Adrenal gland (tissue), 19 donors: ENCODE measurements at regions of chr6 and their contacts with region 1.

Region 1: DNA sequence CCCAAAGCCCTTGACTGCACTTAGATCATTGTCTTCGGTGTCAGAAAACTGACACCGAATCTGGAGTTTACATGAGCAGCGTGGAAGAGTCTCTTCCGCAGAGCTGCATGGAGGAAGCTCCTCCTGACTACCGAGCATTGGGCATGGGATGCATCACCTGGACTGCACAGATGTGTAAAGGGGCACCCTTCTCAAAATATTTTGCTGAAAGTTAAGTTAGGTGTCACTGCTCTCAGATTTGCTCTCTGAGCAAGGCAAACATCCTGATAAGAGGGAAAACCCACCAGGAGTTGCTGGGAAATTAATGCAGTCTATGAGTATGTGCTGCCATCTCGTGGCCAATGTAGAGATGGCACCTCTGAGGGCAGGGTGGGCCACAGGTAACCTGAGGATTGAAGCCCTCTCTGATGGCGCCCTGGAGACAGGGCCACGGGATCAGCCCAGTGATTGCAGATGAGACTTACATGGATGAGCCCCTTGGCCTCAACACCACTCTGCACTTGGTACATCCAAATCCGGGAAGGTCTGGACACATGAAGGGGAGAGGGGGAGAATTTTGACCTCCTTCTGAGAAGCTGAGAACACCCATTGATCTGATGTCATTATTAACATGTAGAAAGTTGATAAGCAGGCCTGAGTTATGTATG is 129.9 kb downstream of the LPA start:
- DNase-seq: peak; percentile 31 to 78 (median 48)
- H3K4me3 ChIP-seq: no peak overlapping the region
- H3K27ac ChIP-seq: no peak overlapping the region
- H3K4me1 ChIP-seq: no peaks in the 10 kb centered on the region
- H3K27me3 ChIP-seq: no peaks in the 10 kb centered on the region
- CTCF ChIP-seq: peak; percentile 82 to 97 (median 92)
- POLR2A ChIP-seq: no peak

Region 2: DNA sequence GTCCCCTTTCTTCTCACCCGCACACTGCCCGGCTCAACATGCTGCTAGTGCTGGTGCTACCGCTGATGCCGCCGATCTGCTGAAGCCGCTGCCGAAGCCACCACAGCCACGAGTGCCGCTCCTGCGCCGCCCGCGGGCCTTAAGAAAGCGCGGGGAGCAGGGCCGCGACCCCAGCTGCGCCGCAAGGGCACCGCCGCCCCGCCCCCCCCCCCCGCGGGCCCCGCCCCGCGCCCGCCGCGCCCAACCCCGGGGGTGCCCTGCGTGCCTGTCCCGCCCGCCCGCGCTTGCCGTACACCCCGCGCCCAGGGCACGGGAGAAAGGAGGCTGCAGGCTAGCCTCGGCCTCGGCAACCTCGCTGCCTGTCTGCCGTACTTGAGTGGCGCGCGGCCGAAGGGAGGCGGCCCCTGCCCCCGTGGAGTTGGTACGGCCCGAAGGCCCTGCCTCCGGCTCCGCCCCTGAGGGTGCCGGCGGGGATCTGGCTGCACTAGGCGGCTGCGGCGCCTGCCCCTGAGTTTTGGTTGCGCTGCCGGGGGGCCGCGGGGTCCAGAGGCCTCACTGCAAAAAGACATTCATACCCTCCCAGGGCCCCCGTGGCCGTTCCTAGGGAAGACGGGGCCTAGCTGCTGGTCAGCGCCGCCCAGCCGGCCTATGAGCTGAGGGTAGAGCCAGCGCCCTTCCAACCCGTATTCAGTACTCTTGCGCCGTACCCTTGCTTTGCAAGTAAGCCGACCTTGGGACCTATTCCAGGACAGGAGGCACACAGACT is 840.9 kb before region 1 on chr6 and contains the start of gene SOD2:
- intact Hi-C with region 1: no loop called
- DNase-seq: peak; percentile 87 to 96 (median 93)
- H3K4me3 ChIP-seq: peak within 1 kb of the TSS; percentile 41 to 94 (median 84)
- H3K27ac ChIP-seq: peak within 1 kb of the TSS; percentile 95 to 98 (median 97)
- H3K4me1 ChIP-seq: peaks cover 34 to 47% of the 10 kb centered on the region in 2 donors
- H3K27me3 ChIP-seq: no peaks in the 10 kb centered on the region
- CTCF ChIP-seq: peak in 1 of 6 experiments; percentile 1
- POLR2A ChIP-seq: peak; percentile 80 to 86
- total RNA-seq, gene SOD2: 172 to 3,032 (median 451) TPM

Region 3: DNA sequence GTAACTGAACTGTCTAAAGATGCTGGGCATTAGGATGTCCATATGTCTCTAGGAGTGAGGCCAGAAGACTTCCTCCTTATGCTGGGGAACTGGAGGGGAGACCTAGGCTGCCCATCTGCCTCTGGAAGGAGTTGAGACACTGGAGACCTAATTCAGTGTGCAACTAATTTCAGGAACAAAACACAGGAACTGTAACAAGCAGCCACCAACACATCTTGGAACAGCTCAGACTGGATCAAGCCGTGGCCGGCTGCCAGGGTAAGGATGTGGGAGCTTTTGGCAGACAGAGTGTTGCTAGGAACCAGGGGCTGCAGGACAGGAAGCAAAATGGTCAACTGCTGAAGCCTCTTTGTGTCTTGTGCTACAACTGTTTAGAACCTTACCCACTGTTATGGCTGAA is 659.7 kb before region 1 on chr6:
- intact Hi-C with region 1: loop called in 1 of 2 experiments (anchors 10 kb)
- DNase-seq: peak in 3 of 7 donors; percentile 13 to 31 (median 29)
- H3K4me3 ChIP-seq: no peak overlapping the region
- H3K27ac ChIP-seq: no peak overlapping the region
- H3K4me1 ChIP-seq: no peaks in the 10 kb centered on the region
- H3K27me3 ChIP-seq: no peaks in the 10 kb centered on the region
- CTCF ChIP-seq: no peak
- POLR2A ChIP-seq: no peak

Region 4: DNA sequence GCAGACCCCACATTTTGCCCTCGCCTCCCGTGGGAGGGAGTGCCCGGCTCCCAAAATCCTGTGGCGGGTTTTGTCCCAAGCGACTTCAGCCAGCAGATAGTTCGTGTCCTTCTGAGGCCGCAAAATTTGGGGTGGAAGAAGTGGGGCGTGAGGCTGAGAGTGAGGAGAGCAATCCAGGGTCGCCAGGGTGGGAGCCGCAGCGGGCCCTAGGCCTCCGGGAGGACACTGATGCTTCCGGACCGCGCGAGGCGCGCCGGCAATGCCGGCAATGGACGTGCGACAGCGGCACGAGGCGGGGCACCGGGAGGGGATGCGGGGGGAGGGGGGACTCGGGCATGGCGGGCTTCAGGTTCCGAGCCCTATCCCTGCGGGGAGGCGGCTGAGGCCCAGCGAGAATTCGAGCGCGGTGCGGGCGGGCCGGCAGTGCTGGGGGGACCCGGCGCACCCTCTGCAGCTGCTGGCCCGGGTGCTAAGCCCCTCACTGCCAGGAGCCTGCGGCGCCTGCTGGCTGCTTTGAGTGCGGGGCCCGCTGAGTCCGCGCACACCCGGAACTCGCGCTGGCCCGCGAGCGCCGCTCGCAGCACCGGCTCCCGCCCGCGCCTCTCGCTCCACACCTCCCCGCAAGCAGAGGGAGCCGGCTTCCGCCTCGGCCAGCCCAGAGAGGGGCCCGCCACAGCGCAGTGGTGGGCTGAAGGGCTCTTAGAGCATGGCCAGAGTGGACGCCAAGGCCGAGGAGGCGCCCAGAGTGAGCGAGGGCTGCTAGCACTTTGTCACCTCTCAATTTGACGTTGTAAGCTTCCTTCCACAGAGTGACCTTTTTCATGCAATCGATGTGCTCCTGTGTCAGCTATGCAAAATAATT is 13.9 kb before region 1 on chr6:
- intact Hi-C with region 1: loop called in 1 of 2 experiments (anchors 2 kb)
- DNase-seq: peak; percentile 69 to 87 (median 80)
- H3K4me3 ChIP-seq: peak overlapping the region; percentile 6 to 77 (median 45)
- H3K27ac ChIP-seq: peak overlapping the region in 4 of 5 donors; percentile 43 to 88 (median 66)
- H3K4me1 ChIP-seq: peaks cover 0 to 5% of the 10 kb centered on the region in 2 donors
- H3K27me3 ChIP-seq: no peaks in the 10 kb centered on the region
- CTCF ChIP-seq: peak in 4 of 6 experiments; percentile 2 to 92 (median 58)
- POLR2A ChIP-seq: peak in 1 of 2 donors; percentile 23